Ascending aorta (tissue), 2 donors: ENCODE measurements at regions of chr4 and their contacts with region 1.

Region 1: GRCh38 chr4:173420324-173420752 is 21.4 kb upstream of the SCRG1 start:
- DNase-seq: no peak
- H3K4me3 ChIP-seq: no peak overlapping the region
- H3K27ac ChIP-seq: no peak overlapping the region
- H3K4me1 ChIP-seq: peaks cover 0 to 7% of the 10 kb centered on the region in 2 donors
- H3K27me3 ChIP-seq: no peaks in the 10 kb centered on the region
- CTCF ChIP-seq: peak in 2 of 3 experiments; percentile 45 to 61

Region 2: GRCh38 chr4:173318648-173319211 is 101.6 kb before region 1 on chr4:
- intact Hi-C with region 1: loop called (anchors 1 kb)
- DNase-seq: no peak
- H3K4me3 ChIP-seq: no peak overlapping the region
- H3K27ac ChIP-seq: no peak overlapping the region
- H3K4me1 ChIP-seq: no peaks in the 10 kb centered on the region
- H3K27me3 ChIP-seq: no peaks in the 10 kb centered on the region
- CTCF ChIP-seq: peak in 1 of 3 experiments; percentile 50

Region 3: DNA sequence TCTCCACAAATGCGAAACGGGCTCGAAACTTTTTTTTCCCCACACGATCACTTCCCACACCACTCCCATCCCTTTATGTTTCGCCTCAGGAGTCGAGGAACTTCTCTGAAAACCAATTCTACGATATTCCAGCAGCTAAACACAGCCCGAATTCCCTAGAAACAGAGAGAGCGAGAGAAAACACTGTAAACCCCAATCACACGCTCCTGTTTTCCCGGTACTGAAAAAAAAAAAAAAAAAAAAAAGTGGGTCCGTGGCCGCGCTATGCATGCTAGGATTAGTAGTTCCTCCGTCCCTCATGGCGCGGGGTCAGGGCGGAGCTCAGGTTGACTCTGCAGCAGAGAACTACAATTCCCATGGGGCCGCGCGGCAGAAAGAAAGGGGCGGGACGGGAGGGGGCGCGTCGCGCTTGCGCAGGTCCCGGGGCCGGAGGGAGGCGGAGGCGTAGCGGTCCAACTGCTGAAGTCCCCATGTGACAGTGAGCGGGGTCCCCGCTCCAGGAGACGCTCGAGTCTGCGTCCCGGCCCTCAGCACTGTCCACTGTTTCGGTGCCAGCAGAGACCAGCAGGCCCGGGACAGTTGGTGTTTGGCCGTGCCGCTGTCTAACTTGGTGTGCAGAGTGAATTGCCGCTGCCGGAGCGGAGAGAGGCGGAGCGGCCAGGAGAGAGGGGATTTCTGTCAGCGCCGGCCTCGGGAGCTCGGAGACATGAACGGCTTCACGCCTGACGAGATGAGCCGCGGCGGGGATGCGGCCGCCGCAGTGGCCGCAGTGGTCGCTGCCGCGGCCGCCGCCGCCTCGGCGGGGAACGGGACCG is 49.7 kb before region 1 on chr4 and contains the start of gene SAP30:
- intact Hi-C with region 1: loop called (anchors 5 kb)
- DNase-seq: peak; percentile 94 to 99
- H3K4me3 ChIP-seq: peak within 1 kb of the TSS; percentile 77 to 79
- H3K27ac ChIP-seq: peak within 1 kb of the TSS; percentile 92 to 97
- H3K4me1 ChIP-seq: peaks cover 3 to 21% of the 10 kb centered on the region in 2 donors
- H3K27me3 ChIP-seq: no peaks in the 10 kb centered on the region
- CTCF ChIP-seq: no peak
- total RNA-seq, gene SAP30: 9.3 TPM

Region 4: GRCh38 chr4:173494013-173494970 is 74.0 kb after region 1 on chr4:
- intact Hi-C with region 1: loop called (anchors 1 kb)
- DNase-seq: peak in 1 of 2 donors; percentile 81
- H3K4me3 ChIP-seq: peak overlapping the region; percentile 56 to 63
- H3K27ac ChIP-seq: no peak overlapping the region
- H3K4me1 ChIP-seq: peaks cover 0 to 17% of the 10 kb centered on the region in 2 donors
- H3K27me3 ChIP-seq: no peaks in the 10 kb centered on the region
- CTCF ChIP-seq: peak; percentile 67 to 87 (median 76)

Region 5: DNA sequence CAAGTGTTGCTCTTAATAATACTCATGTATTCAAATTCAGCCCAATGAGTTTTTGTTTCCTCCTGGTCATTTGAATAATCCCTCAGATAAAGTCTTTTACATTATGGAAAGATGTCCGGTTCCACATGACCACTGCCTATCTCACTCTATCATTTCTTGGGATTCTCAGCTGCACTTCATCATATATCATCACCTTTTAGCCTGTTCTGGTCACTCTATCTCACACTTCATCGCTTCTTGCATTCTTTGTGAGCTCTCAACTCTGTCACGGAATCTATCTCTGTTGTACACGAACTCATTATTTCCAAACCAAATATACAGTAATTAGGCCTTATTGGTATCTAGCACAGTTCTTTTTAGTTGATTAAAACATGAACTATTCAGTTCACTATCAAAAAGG is 236.6 kb after region 1 on chr4:
- intact Hi-C with region 1: no loop called
- DNase-seq: no peak
- H3K4me3 ChIP-seq: no peak overlapping the region
- H3K27ac ChIP-seq: no peak overlapping the region
- H3K4me1 ChIP-seq: peaks cover 0 to 2% of the 10 kb centered on the region in 2 donors
- H3K27me3 ChIP-seq: no peaks in the 10 kb centered on the region
- CTCF ChIP-seq: no peak

Region 6: DNA sequence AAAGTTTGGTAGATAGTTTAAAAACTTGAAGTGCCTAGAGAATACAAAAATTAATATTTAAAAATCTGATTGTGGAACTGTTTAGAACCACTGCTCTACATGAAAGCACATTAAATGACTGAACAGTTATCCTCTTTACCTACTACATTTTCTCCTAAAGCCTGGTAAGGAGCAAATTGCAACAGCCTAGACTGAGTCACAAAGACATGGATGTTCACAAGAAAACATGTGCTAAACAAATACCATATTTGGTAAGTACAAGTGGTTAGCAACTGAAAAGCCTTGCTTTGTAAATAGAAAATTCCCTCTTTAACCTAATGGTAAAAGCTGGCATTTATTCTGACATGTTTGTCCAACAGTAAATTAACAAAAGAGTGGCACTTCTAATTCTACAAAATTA is 660.0 kb after region 1 on chr4:
- intact Hi-C with region 1: no loop called
- DNase-seq: no peak
- H3K4me3 ChIP-seq: no peak overlapping the region
- H3K27ac ChIP-seq: no peak overlapping the region
- H3K4me1 ChIP-seq: no peaks in the 10 kb centered on the region
- H3K27me3 ChIP-seq: no peaks in the 10 kb centered on the region
- CTCF ChIP-seq: no peak

Region 7: DNA sequence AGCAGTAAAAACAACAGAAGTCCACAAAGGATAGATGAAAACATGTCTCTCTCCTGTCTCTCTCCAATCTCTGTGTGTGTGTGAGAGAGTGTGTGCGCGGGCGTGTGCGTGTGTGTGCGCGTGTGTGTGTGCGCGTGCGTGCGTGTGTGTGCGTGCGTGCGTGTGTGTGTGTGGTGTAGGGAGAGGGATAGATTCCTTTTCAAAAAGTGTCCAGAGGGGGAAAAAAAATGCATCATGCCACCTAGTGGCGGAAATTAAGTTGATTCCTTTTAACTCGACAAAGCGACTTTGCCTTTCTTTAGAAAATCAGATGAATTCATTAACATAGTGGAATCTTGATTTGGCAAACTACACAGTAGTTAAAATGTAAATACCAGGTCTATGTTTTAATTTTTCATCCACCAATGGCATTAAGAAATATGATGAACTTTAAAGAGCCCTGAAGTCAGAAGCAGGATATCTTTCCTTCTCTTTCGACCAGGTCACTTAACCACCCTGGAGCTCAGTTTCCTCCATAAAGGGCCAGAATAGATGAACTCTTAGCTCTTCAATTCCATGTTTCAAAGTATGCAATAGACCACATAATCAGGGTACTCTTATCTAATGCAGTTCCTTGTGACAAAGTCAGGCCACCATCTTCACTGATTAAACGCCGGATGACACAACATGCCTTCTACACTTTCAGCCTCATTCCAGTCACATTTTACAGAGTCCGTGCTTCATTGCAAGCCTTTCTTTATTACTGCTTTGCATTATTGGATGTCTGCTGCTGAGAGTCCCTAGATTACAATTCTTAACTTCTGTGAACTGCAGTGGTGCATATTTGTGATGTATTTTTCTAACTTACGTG is 700.3 kb after region 1 on chr4:
- intact Hi-C with region 1: loop called (anchors 10 kb)
- DNase-seq: peak in 1 of 2 donors; percentile 70
- H3K4me3 ChIP-seq: peak overlapping the region; percentile 33 to 53
- H3K27ac ChIP-seq: no peak overlapping the region
- H3K4me1 ChIP-seq: no peaks in the 10 kb centered on the region
- H3K27me3 ChIP-seq: no peaks in the 10 kb centered on the region
- CTCF ChIP-seq: peak; percentile 38 to 61 (median 50)